A673 (cell line): ENCODE measurements at regions of chr3 and their contacts with region 1.

Region 1: DNA sequence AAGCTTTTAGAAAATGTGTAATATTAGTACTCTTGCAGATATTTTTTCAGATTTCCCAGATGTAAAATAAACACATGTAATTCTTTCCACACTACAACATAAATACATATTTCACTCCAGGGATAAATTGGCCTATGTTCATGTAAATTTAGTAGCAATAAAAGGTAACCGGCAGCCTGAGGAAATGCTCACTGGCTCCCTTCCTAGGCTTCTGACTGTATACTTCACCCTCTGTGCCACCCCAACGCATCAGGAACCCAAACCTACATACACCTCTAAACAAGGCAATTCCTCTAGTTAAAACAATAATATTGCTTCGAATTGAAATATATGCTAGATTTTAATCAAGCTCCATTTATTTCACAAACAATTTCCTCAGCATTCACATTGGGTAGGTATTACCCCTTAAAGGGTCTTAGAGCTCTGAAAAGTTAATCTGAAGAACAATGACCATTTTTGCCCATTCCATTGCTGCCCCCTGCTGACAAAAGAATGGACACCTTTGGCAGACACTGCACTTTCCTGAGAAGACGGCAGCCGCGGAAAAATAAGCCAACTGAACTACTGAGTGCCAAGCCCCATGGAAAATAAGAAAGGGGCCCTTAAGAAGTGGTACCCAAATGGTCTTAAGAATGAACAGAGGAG is 212.5 kb downstream of the OSBPL10 start:
- DNase-seq: peak; percentile 63
- H3K4me3 ChIP-seq: no peak overlapping the region
- H3K27ac ChIP-seq: no peak overlapping the region
- H3K4me1 ChIP-seq: no peaks in the 10 kb centered on the region
- H3K27me3 ChIP-seq: no peaks in the 10 kb centered on the region
- CTCF ChIP-seq: peak; percentile 44

Region 2: GRCh38 chr3:31610700-31611275 is 157.8 kb before region 1 on chr3:
- CTCF ChIA-PET with region 1: no interaction called
- POLR2A ChIA-PET with region 1: no interaction called
- intact Hi-C with region 1: loop called (anchors 2 kb)
- DNase-seq: peak; percentile 60
- H3K4me3 ChIP-seq: no peak overlapping the region
- H3K27ac ChIP-seq: no peak overlapping the region
- H3K4me1 ChIP-seq: no peaks in the 10 kb centered on the region
- H3K27me3 ChIP-seq: no peaks in the 10 kb centered on the region
- CTCF ChIP-seq: peak; percentile 72